Panc1 (cell line): ENCODE measurements at regions of chr5 and their contacts with region 1.

Region 1: DNA sequence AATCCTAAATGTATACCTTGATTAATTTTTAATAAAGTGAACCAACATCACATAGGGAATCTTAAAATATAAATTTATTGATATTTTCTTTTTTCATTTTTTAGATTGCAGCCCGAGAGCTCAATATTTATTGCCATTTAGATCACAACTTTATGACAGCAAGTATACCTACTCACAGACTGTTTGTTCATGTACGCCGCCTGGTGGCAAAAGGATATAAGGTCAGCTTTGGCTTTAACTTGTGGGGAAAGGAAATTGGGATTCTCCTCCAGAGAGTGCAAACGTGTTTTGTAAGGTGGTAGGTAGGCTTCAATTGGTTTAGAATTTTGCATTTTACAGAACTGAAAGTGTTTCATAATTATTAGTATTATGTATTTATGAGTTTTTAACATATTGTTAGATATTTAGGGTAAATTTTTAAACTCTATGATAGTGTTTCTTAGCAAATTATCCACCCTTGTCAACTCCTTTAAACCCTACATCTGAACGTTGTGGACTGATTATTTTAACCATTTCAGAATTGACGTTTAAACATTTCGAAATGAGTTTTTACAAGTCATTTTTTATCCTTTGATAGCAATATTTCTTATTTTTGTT is 17.5 kb upstream of the DHFR start:
- DNase-seq: peak; percentile 51
- ATAC-seq: peak; percentile 95
- H3K4me3 ChIP-seq: no peak overlapping the region
- H3K27ac ChIP-seq: no peak overlapping the region
- H3K4me1 ChIP-seq: no peaks in the 10 kb centered on the region
- H3K27me3 ChIP-seq: no peaks in the 10 kb centered on the region
- CTCF ChIP-seq: peak; percentile 85; the same call in 1 of the 2 replicates

Region 2: DNA sequence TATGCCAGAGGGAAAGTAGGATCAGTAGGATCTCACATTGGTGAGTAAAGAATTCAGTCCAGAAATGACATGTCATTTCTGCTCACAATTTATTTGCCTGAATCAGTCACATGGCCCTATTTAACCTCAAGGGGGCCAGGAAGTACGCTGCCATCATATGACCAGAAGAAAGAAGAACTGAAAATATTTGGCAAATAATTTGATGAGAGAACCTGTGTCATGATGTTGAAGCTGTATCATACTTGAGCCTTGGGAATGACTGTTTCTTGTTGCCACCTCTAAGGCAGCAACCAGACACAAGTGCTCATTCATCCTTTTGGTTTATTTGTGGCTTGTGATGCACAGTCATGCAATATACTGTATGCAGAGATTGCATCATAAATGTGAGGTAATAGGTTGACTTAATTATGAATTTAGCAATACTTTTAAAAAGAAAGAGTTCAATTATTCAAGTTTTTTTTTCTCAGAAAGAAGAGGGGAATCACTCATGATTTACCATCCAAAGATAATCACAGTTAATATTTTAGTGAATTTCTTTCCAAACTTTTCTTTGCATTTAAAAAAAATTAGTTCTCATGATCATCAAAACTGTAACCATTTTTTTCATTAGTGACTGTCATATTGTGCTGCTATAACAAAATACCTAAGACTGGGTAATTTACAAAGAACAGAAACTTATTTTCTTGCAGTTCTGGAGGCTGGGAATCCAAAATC is 272.6 kb before region 1 on chr5:
- CTCF ChIA-PET with region 1: no interaction called
- POLR2A ChIA-PET with region 1: no interaction called
- in situ Hi-C with region 1: no loop called
- intact Hi-C with region 1: no loop called
- DNase-seq: peak; percentile 39
- ATAC-seq: no peak
- H3K4me3 ChIP-seq: no peak overlapping the region
- H3K27ac ChIP-seq: no peak overlapping the region; the same call in 1 of the 2 replicates
- H3K4me1 ChIP-seq: no peaks in the 10 kb centered on the region
- H3K27me3 ChIP-seq: no peaks in the 10 kb centered on the region
- CTCF ChIP-seq: no peak

Region 3: GRCh38 chr5:80487829-80488721 is 184.2 kb before region 1 on chr5 and contains the start of gene FAM151B:
- CTCF ChIA-PET with region 1: interaction called, 5 read pairs
- POLR2A ChIA-PET with region 1: no interaction called
- in situ Hi-C with region 1: no loop called
- intact Hi-C with region 1: loop called (anchors 5 kb)
- DNase-seq: peak; percentile 87
- ATAC-seq: peak; percentile 97
- H3K4me3 ChIP-seq: peak within 1 kb of the TSS; percentile 64 to 86
- H3K27ac ChIP-seq: peak within 1 kb of the TSS; percentile 94
- H3K4me1 ChIP-seq: peaks cover 13% of the 10 kb centered on the region
- H3K27me3 ChIP-seq: no peaks in the 10 kb centered on the region
- CTCF ChIP-seq: peak; percentile 64
- total RNA-seq, gene FAM151B: 2.8 TPM

Region 4: DNA sequence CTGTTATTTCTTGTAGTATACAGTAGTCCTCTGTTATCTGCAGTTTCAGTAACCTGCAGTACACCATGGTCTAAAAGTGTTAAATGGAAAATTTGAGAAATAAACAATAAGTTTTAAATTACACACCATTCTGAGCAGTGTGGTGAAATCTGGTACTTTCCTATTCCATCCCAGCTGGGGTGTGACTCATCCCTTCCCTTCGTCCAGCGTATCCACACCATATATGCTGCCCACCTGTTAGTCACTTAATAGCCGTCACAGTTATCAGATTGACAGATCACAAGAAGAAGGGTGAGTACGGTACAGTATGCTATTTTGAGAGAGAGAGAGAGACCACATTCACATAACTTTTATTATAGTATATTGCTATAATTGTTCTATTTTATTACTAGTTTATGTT is 155.4 kb before region 1 on chr5:
- CTCF ChIA-PET with region 1: no interaction called
- POLR2A ChIA-PET with region 1: interaction called, 13 read pairs
- in situ Hi-C with region 1: no loop called
- intact Hi-C with region 1: no loop called
- DNase-seq: peak; percentile 28
- ATAC-seq: peak; percentile 97
- H3K4me3 ChIP-seq: no peak overlapping the region
- H3K27ac ChIP-seq: no peak overlapping the region
- H3K4me1 ChIP-seq: 0 out of 2 replicates have a peak, but pooled peaks cover 2% of the 10 kb centered on the region
- H3K27me3 ChIP-seq: no peaks in the 10 kb centered on the region
- CTCF ChIP-seq: no peak

Region 5: GRCh38 chr5:80565330-80565729 is 106.9 kb before region 1 on chr5:
- CTCF ChIA-PET with region 1: no interaction called
- POLR2A ChIA-PET with region 1: no interaction called
- in situ Hi-C with region 1: no loop called
- intact Hi-C with region 1: no loop called
- DNase-seq: no peak
- ATAC-seq: no peak
- H3K4me3 ChIP-seq: no peak overlapping the region
- H3K27ac ChIP-seq: no peak overlapping the region
- H3K4me1 ChIP-seq: no peaks in the 10 kb centered on the region
- H3K27me3 ChIP-seq: peaks cover 16% of the 10 kb centered on the region
- CTCF ChIP-seq: no peak

Region 6: GRCh38 chr5:81165493-81166119 is 493.4 kb after region 1 on chr5:
- CTCF ChIA-PET with region 1: no interaction called
- POLR2A ChIA-PET with region 1: no interaction called
- in situ Hi-C with region 1: no loop called
- intact Hi-C with region 1: no loop called
- DNase-seq: peak; percentile 67
- ATAC-seq: peak; percentile 93
- H3K4me3 ChIP-seq: no peak overlapping the region
- H3K27ac ChIP-seq: no peak overlapping the region
- H3K4me1 ChIP-seq: no peaks in the 10 kb centered on the region
- H3K27me3 ChIP-seq: no peaks in the 10 kb centered on the region
- CTCF ChIP-seq: peak; percentile 89